OCI-LY7 (cell line): ENCODE measurements at regions of chr7 and their contacts with region 1.

Region 1: GRCh38 chr7:100611974-100612729 is at the start of gene MOSPD3:
- DNase-seq: peak; percentile 100
- H3K4me3 ChIP-seq: peak within 1 kb of the TSS; percentile 69
- H3K27ac ChIP-seq: peak within 1 kb of the TSS; percentile 76
- H3K4me1 ChIP-seq: peaks cover 9% of the 10 kb centered on the region
- CTCF ChIP-seq: no peak
- total RNA-seq, gene MOSPD3: 7.1 and 12.0 TPM in 2 replicates

Region 2: GRCh38 chr7:100586266-100587025 is 25.7 kb before region 1 on chr7 and contains the start of gene FBXO24:
- CTCF ChIA-PET with region 1: interaction called, 5 read pairs
- POLR2A ChIA-PET with region 1: interaction called, 13 read pairs
- intact Hi-C with region 1: no loop called
- DNase-seq: peak; percentile 100
- H3K4me3 ChIP-seq: peak within 1 kb of the TSS; percentile 91
- H3K27ac ChIP-seq: peak within 1 kb of the TSS; percentile 92
- H3K4me1 ChIP-seq: peaks cover 29% of the 10 kb centered on the region
- CTCF ChIP-seq: no peak
- total RNA-seq, gene FBXO24: 0.16 TPM in 1 of 2 replicates, not detected in the other

Region 3: DNA sequence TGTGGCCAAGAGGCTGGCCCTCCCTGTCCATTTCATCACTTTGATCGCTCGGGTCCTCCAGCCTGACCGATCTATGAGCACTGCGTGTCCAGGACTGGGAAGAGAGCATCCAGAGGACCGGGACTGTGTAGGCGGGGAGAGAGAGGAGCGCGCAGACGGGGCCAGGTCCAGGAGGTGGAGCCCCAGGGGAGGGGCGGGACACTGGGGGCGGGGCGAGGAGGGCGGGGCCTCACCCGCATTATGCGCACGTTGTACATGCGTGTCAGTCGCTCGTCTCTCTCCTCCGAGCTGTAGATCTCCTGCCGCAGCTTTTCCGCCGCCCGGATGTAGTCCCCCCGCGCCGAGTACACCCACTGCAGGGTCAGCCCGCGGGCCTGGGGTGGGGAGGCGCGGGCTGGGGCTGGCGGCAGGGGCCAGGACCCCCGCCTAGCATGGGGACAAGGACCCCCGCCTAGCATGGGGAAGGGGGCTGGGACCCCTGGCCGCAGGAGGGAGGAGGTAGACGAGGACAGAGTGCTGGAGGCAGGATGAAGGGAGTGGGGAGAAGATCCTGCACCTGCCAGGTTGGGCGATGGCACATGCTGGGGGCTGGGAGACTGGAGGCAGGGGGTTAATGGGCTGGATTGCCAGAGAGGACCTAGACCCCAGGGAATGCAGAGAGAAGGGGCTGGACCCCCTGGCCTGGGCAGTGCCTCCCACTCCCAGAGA is 14.5 kb after region 1 on chr7:
- CTCF ChIA-PET with region 1: interaction called, 3 read pairs
- POLR2A ChIA-PET with region 1: interaction called, 12 read pairs
- intact Hi-C with region 1: loop called (anchors 2 kb)
- DNase-seq: peak; percentile 85
- H3K4me3 ChIP-seq: peak overlapping the region; percentile 62
- H3K27ac ChIP-seq: peak overlapping the region; percentile 39
- H3K4me1 ChIP-seq: peaks cover 12% of the 10 kb centered on the region
- CTCF ChIP-seq: no peak

Region 4: DNA sequence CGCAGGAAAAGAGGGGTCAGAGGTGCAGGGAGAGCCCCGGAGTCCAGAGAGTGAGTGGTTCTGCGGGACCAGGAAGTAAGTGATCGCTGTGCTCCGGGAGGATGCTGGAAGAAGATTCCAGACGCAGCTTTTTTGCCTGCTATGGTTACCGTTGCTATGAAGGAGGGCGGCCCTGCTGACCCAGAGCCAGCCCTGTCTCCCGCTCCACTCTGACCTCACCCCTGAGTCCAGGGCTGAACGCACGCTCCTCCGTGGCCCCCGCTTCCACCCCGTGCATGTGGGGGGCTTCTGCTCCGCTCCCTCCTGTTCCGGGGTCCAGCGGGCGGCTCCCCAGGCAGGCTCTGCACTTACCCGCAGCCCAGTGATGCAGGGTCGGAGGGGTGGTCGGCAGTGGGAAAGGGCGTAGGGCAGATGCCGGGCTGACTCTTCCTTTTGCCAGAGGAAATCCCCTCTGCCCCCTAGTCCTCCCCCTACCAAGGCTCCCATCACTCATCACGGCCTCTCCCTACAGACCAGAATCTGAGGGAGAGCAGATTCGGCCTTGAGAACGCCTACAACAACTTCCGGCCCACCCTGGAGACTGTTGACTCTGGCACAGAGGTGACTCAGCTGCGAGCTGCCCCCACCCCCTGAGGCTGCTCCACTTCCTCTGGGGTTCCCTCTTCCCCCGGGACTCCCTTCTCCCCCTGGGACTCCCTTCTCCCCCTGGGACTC is 405.1 kb after region 1 on chr7:
- CTCF ChIA-PET with region 1: no interaction called
- POLR2A ChIA-PET with region 1: no interaction called
- intact Hi-C with region 1: no loop called
- DNase-seq: peak; percentile 26
- H3K4me3 ChIP-seq: peak overlapping the region; percentile 26
- H3K27ac ChIP-seq: no peak overlapping the region
- H3K4me1 ChIP-seq: peaks cover 10% of the 10 kb centered on the region
- CTCF ChIP-seq: no peak